Uterus (tissue), 4 donors: ENCODE measurements at regions of chr4 and their contacts with region 1.

Region 1: GRCh38 chr4:22391551-22391950 is 124.3 kb downstream of the ADGRA3 start:
- DNase-seq: no peak
- H3K4me3 ChIP-seq: no peak overlapping the region
- H3K27ac ChIP-seq: no peak overlapping the region
- H3K4me1 ChIP-seq: no peaks in the 10 kb centered on the region
- H3K27me3 ChIP-seq: no peaks in the 10 kb centered on the region
- CTCF ChIP-seq: no peak
- POLR2A ChIP-seq: no peak

Region 2: GRCh38 chr4:21790438-21791029 is 601.0 kb before region 1 on chr4:
- intact Hi-C with region 1: loop called (anchors 5 kb)
- DNase-seq: no peak
- H3K4me3 ChIP-seq: no peak overlapping the region
- H3K27ac ChIP-seq: no peak overlapping the region
- H3K4me1 ChIP-seq: no peaks in the 10 kb centered on the region
- H3K27me3 ChIP-seq: no peaks in the 10 kb centered on the region
- CTCF ChIP-seq: peak in 3 of 4 experiments; percentile 40 to 67 (median 41)
- POLR2A ChIP-seq: no peak